Dorsolateral prefrontal cortex (tissue), 120 donors: ENCODE measurements at regions of chr6 and their contacts with region 1.

Region 1: GRCh38 chr6:13487122-13488014 is at the start of gene GFOD1:
- DNase-seq: peak; percentile 74 to 92 (median 86)
- H3K4me3 ChIP-seq: peak within 1 kb of the TSS; percentile 65 to 94 (median 84)
- H3K27ac ChIP-seq: peak within 1 kb of the TSS; percentile 73 to 97 (median 92)
- H3K27me3 ChIP-seq: no peaks in the 10 kb centered on the region
- CTCF ChIP-seq: peak in 26 of 56 donors; percentile 4 to 51 (median 25)
- total RNA-seq, gene GFOD1: 36.8 to 141 (median 101) TPM

Region 2: DNA sequence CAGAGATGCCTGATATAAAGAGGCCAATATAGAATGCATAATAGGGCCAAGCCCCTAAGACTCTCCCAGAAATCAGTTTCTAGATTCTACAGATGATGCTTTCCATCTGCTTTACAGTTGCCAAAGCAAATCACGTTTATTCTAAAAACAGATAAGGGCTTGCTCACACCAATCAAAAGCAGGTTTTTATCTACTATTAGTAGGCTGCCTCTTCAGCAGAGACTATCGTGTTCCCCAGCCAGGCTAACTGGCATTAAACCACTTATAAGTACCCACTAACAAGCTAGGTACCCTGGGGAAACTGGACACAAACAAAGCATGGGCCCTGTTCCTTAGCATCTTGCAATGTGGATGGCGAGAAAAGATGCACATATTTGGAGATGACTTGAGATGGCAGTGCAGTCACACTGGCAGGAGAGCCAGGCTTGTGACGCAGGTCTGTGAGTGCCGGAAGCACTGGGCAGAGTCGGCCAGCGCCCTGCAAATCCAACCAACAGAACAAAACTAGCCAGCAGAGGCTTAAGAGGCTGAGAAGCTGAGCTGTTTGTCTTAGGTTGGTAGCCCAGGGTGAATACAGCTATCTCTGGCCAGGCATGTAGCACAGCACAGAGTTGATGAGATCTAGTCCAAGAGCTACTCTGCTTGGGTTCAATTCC is 73.3 kb before region 1 on chr6:
- intact Hi-C with region 1: loop called (anchors 5 kb)
- DNase-seq: peak; percentile 47 to 90 (median 80)
- H3K4me3 ChIP-seq: peak overlapping the region in 3 of 59 donors; percentile 7 to 9 (median 8)
- H3K27ac ChIP-seq: peak overlapping the region; percentile 26 to 95 (median 78)
- H3K27me3 ChIP-seq: no peaks in the 10 kb centered on the region
- CTCF ChIP-seq: peak in 43 of 56 donors; percentile 2 to 62 (median 35)

Region 3: DNA sequence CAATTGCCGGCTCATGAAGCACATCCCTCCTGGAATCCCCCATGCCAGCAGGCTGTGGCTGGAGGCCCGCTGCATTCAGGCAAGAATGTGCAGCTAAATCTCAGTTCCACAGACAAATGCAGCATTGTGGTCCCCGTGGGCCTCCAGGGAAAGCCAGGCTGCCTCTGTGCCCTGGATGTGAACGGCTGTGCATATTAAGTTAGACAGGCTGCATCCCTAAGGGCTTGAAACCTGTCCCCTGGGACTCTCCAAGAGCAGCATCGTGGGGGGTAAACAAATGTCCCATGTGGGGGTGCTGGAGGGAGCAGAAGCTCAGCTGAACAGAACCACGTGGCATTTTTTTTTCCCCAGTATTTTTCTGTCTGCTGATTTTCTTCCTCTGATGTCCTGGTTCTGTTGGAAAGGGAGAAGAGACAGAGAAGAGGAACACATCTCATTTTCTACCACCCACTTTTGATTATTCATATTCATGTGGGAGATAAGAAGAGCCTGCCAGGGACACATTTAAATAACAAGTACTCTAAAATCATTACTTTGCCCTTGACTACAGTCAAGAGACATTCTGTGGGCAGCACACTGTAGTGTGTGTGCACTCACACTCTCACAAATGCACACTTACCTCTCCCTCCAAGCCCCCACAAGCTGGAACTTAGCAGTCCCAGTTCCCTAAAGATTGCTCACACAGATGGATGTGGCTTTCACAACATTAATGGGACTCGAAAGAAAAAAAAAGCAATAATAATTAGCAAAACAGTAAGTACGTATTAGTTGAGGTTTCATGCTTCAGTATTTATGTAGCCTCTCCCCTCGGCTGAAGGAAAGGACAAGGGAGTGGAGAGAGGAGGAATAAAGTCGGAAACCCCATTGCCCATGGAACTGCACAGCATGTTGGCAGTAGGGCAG is 16.9 kb before region 1 on chr6:
- intact Hi-C with region 1: loop called in 1 of 2 experiments (anchors 1 kb)
- DNase-seq: peak in 7 of 10 donors; percentile 52 to 78 (median 72)
- H3K4me3 ChIP-seq: peak overlapping the region in 45 of 59 donors; percentile 1 to 58 (median 27)
- H3K27ac ChIP-seq: peak overlapping the region; percentile 65 to 96 (median 87)
- H3K27me3 ChIP-seq: no peaks in the 10 kb centered on the region
- CTCF ChIP-seq: peak in 4 of 56 donors; percentile 6 to 14 (median 8)

Region 4: DNA sequence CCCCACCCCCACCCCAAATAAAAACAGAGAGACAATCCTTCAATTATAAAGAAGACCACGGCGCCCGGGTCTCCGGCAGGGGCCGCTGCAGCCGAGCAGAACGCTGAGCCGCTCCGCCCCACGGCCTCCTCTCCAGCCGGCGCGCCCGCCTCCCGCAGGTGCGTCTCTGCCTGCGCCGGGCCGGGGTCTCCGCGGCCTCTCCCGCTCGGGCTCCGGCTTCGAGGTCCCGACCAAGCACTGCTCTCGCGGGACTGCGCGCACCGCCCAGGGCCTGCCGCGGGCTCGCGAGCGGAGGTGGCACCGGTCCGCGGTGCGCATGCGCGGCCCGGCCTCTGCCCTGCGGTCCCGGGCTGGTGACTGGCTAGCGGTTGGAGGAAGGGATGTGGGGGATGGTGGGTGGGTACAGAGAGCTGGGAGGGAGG is 86.8 kb after region 1 on chr6:
- intact Hi-C with region 1: loop called (anchors 2 kb)
- DNase-seq: peak; percentile 70 to 92 (median 84)
- H3K4me3 ChIP-seq: peak overlapping the region; percentile 46 to 96 (median 87)
- H3K27ac ChIP-seq: peak overlapping the region; percentile 75 to 99 (median 97)
- H3K27me3 ChIP-seq: no peaks in the 10 kb centered on the region
- CTCF ChIP-seq: peak; percentile 26 to 78 (median 60)

Region 5: GRCh38 chr6:13814176-13814937 is 327.0 kb after region 1 on chr6 and contains the start of gene MCUR1:
- intact Hi-C with region 1: loop called in 1 of 2 experiments (anchors 2 kb)
- DNase-seq: peak; percentile 69 to 91 (median 82)
- H3K4me3 ChIP-seq: peak within 1 kb of the TSS; percentile 66 to 99 (median 92)
- H3K27ac ChIP-seq: peak within 1 kb of the TSS; percentile 60 to 99 (median 97)
- H3K27me3 ChIP-seq: no peaks in the 10 kb centered on the region
- CTCF ChIP-seq: peak in 53 of 56 donors; percentile 29 to 77 (median 52)
- total RNA-seq, gene MCUR1: 22.6 to 50.0 (median 35.4) TPM